Activated CD8-positive, alpha-beta T cell treated with anti-CD3 and anti-CD28 coated beads, Interleukin-2, amount 10 ng/mL, durations not matched to agents 7 days and 5 days (primary cell): ENCODE measurements at regions of chr4 and their contacts with region 1.

Region 1: DNA sequence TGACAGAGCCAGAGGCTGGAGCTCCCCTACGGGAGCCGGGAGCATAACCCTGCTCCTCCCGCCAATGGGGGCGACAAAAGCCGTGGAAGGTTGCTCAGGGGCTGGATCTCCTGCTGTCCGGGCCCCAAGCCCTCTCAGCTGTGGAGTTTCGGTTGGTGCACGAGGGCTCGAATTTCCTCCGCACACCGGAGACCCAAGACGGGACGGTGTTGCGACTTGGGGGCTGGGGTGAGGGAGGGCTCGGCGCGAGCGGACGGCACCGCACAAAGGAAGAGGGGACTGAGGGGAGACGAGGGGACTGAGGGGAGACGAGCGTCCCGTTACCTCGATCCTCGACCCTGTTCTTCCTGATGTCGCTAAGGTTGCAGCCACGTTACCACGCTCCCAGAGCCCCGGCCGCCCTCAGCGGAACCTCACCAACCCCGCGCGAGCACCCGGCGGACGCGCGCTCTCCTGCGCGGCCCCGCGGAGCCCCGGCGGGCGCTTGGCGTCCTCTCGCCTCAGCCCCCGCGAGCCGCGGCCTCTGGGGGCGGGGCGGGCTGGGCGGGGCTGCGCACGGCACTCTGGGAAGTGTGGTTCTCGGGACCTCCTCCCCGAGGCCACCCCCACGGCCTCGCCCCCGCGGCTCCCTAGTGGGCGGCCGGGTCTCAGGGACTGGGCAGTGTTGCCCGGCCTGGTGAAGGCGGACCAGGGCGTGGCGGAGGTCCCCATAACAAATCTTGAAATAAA is at the start of gene KLHL8:
- DNase-seq: peak; percentile 88
- ATAC-seq: peak; percentile 93
- H3K4me3 Mint-ChIP-seq: peak within 1 kb of the TSS; percentile 94
- H3K27ac Mint-ChIP-seq: peak within 1 kb of the TSS; percentile 95
- H3K4me1 Mint-ChIP-seq: peaks cover 14% of the 10 kb centered on the region
- H3K27me3 Mint-ChIP-seq: peaks cover 9% of the 10 kb centered on the region
- total RNA-seq, gene KLHL8: 13.4 to 15.8 TPM

Region 2: DNA sequence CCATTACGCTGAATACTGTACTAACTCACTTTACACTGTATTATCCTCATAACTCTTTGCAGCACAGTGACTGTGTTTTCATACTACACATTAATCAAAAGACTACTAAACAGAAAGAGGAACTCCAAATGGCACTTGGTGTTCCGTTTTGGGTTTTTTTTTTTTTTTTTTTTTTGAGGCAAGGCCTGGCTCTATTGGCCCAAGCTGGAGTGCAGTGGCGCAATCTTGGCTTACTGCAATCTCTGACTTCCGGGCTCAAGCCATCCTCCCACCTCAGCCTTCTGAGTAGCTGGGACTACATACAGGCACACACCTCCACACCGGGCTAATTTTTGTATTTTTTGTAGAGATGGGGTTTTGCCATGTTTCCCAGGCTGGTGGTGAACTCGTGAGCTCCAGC is 10.6 kb before region 1 on chr4:
- CTCF ChIA-PET with region 1: interaction called, 13 read pairs
- POLR2A ChIA-PET with region 1: interaction called, 8 read pairs
- DNase-seq: peak; percentile 52
- ATAC-seq: peak; percentile 78
- H3K4me3 Mint-ChIP-seq: peak overlapping the region; percentile 42
- H3K27ac Mint-ChIP-seq: peak overlapping the region; percentile 46
- H3K4me1 Mint-ChIP-seq: peaks cover 13% of the 10 kb centered on the region
- H3K27me3 Mint-ChIP-seq: no peaks in the 10 kb centered on the region

Region 3: GRCh38 chr4:87304671-87305432 is 84.6 kb after region 1 on chr4:
- CTCF ChIA-PET with region 1: no interaction called
- POLR2A ChIA-PET with region 1: no interaction called
- DNase-seq: no peak
- ATAC-seq: no peak
- H3K4me3 Mint-ChIP-seq: no peak overlapping the region
- H3K27ac Mint-ChIP-seq: no peak overlapping the region
- H3K4me1 Mint-ChIP-seq: no peaks in the 10 kb centered on the region
- H3K27me3 Mint-ChIP-seq: no peaks in the 10 kb centered on the region

Region 4: GRCh38 chr4:87375719-87376291 is 155.5 kb after region 1 on chr4:
- CTCF ChIA-PET with region 1: no interaction called
- POLR2A ChIA-PET with region 1: no interaction called
- DNase-seq: no peak
- ATAC-seq: peak; percentile 44
- H3K4me3 Mint-ChIP-seq: no peak overlapping the region
- H3K27ac Mint-ChIP-seq: peak overlapping the region; percentile 46
- H3K4me1 Mint-ChIP-seq: peaks cover 2% of the 10 kb centered on the region
- H3K27me3 Mint-ChIP-seq: no peaks in the 10 kb centered on the region